Activated T-helper 1 cell treated with anti-CD3 and anti-CD28 coated beads, Interleukin-12 subunit alpha, Interleukin-12 subunit beta, Interleukin-2, Interleukin-4 antibody, amounts not matched to agents 30 ng/mL and 10 ng/mL and 1 ng/mL, durations not matched to agents 14 hours and 24 hours and 36 hours (primary cell): ENCODE measurements at regions of chr2 and their contacts with region 1.

Region 1: DNA sequence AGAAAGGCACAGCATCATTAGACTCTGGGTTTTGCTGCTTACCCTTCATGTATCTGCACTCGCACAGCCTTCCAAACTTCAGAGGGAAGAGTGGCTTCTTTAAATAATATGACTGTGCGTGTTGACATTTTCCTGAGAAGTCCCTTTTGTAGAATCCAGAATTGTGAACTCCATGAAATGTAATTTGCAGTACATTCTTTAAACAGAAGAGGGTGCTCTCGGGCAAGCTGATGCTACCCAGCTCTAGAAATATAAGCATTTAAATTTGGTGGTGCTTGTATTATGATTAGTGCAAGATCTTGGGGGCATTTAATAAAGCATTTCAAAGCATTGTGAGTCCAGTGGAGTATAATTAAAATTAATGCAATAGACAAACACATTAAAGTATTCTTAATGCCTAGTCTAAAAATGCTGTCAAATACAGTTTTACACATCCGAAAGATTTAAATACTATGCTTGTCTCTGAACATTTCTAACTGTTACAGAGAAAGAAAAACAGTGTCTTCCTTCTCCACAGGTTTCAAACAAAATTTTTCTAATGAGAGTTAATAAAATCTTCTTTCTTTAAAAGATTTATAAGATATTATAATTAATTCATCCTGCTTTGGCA is 17.3 kb upstream of the GTF2A1L start:
- DNase-seq: no peak
- H3K4me3 Mint-ChIP-seq: no peak overlapping the region
- H3K27ac Mint-ChIP-seq: no peak overlapping the region
- H3K4me1 Mint-ChIP-seq: no peaks in the 10 kb centered on the region
- H3K27me3 Mint-ChIP-seq: peaks cover 12% of the 10 kb centered on the region

Region 2: GRCh38 chr2:47798631-47799030 is 801.7 kb before region 1 on chr2:
- intact Hi-C with region 1: no loop called
- DNase-seq: no peak
- H3K4me3 Mint-ChIP-seq: no peak overlapping the region
- H3K27ac Mint-ChIP-seq: no peak overlapping the region
- H3K4me1 Mint-ChIP-seq: peaks cover 11% of the 10 kb centered on the region
- H3K27me3 Mint-ChIP-seq: no peaks in the 10 kb centered on the region

Region 3: GRCh38 chr2:48617618-48618017 is 17.3 kb after region 1 on chr2 and contains the start of gene GTF2A1L:
- intact Hi-C with region 1: no loop called
- DNase-seq: no peak
- H3K4me3 Mint-ChIP-seq: no peak within 1 kb of the TSS
- H3K27ac Mint-ChIP-seq: no peak within 1 kb of the TSS
- H3K4me1 Mint-ChIP-seq: no peaks in the 10 kb centered on the region
- H3K27me3 Mint-ChIP-seq: peaks cover 2% of the 10 kb centered on the region
- total RNA-seq, gene GTF2A1L: 0.39 TPM in 1 of 2 replicates, not detected in the other

Region 4: GRCh38 chr2:50401772-50402653 is 1801.7 kb after region 1 on chr2:
- intact Hi-C with region 1: loop called (anchors 5 kb)
- DNase-seq: no peak
- H3K4me3 Mint-ChIP-seq: no peak overlapping the region
- H3K27ac Mint-ChIP-seq: no peak overlapping the region
- H3K4me1 Mint-ChIP-seq: no peaks in the 10 kb centered on the region
- H3K27me3 Mint-ChIP-seq: no peaks in the 10 kb centered on the region

Region 5: GRCh38 chr2:50492477-50492851 is 1892.2 kb after region 1 on chr2:
- intact Hi-C with region 1: loop called (anchors 10 kb)
- DNase-seq: no peak
- H3K4me3 Mint-ChIP-seq: no peak overlapping the region
- H3K27ac Mint-ChIP-seq: no peak overlapping the region
- H3K4me1 Mint-ChIP-seq: peaks cover 8% of the 10 kb centered on the region
- H3K27me3 Mint-ChIP-seq: no peaks in the 10 kb centered on the region